ENCODE measurements at regions of chr4 and their contacts with region 1.

Region 1: GRCh38 chr4:159455675-159456237 is 352.9 kb downstream of the RAPGEF2 start:
- DNase-seq: peak in 1 of 2 donors; percentile 20
- ATAC-seq: no peak
- H3K4me3 ChIP-seq: peak overlapping the region in 1 of 10 donors; percentile 16
- H3K27ac ChIP-seq: no peak overlapping the region
- H3K4me1 ChIP-seq: peaks cover 0 to 7% (median 0%) of the 10 kb centered on the region in 9 donors
- H3K27me3 ChIP-seq: no peaks in the 10 kb centered on the region
- CTCF ChIP-seq: peak; percentile 39 to 73 (median 63)

Region 2: DNA sequence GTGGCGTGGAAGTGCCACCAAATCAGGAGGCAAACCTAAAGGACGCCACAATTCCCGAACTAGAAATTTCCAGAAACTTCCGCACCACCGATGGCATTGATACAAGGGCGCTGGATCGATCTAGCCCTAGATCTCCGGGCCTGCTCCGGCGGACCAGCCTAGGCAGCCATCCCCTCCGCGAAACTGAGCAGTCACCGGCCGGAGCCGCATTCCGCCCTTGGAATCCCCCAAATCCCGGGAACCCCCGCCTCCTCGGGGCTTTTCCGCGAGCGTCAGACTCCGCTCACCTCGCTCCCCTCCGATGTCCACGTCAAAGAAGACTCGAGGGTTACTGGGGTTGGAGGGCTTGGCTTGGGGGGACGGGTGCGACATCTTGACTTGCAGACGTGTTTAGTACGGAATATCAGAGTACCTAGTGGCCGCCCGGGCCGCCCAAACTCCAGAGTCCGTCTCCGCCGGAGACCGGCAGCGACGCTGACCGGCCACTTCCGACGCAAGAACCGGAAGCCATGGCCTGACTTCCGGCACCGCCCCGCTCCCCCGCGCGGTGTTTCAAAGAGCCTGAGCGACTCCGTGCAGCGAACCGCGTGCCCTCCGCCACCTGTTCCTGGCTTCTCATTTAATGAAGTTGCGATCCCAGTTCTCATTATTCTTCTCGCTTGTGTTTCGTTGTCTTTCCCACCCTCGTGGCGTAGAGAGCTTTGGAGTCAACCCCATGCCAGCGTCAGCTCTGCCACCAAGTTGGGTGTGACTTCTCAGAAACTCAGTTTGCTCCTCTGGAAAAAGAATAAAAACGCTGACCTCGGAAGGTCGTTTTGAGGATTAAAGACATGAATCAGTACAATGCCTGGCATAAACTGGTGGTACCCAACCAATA is 732.6 kb before region 1 on chr4 and contains the start of gene PPID:
- intact Hi-C with region 1: loop called in 1 of 10 experiments (anchors 10 kb)
- DNase-seq: peak; percentile 82 to 88
- ATAC-seq: peak; percentile 97 to 99 (median 98)
- H3K4me3 ChIP-seq: peak within 1 kb of the TSS; percentile 62 to 97 (median 78)
- H3K27ac ChIP-seq: peak within 1 kb of the TSS; percentile 82 to 97 (median 92)
- H3K4me1 ChIP-seq: peaks cover 0 to 29% (median 10%) of the 10 kb centered on the region in 9 donors
- H3K27me3 ChIP-seq: no peaks in the 10 kb centered on the region
- CTCF ChIP-seq: peak in 2 of 9 donors; percentile 18 to 19
- total RNA-seq, gene PPID: 23.8 to 37.1 (median 33.1) TPM

Region 3: GRCh38 chr4:159352609-159353008 is 103.1 kb before region 1 on chr4:
- intact Hi-C with region 1: loop called in 1 of 10 experiments (anchors 2 kb)
- DNase-seq: no peak
- ATAC-seq: peak in 3 of 8 donors; percentile 34 to 52 (median 38)
- H3K4me3 ChIP-seq: no peak overlapping the region
- H3K27ac ChIP-seq: peak overlapping the region in 4 of 10 donors; percentile 3 to 49 (median 25)
- H3K4me1 ChIP-seq: peaks cover 0 to 44% (median 3%) of the 10 kb centered on the region in 9 donors
- H3K27me3 ChIP-seq: no peaks in the 10 kb centered on the region
- CTCF ChIP-seq: peak in 1 of 9 donors; percentile 8

Region 4: GRCh38 chr4:159410076-159410777 is 45.5 kb before region 1 on chr4:
- intact Hi-C with region 1: no loop called
- DNase-seq: no peak
- ATAC-seq: no peak
- H3K4me3 ChIP-seq: no peak overlapping the region
- H3K27ac ChIP-seq: no peak overlapping the region
- H3K4me1 ChIP-seq: peaks cover 0 to 24% (median 0%) of the 10 kb centered on the region in 9 donors
- H3K27me3 ChIP-seq: no peaks in the 10 kb centered on the region
- CTCF ChIP-seq: no peak